ENCODE measurements at regions of chr2 and their contacts with region 1.

Region 1: GRCh38 chr2:45643543-45644542 is 7.6 kb upstream of the PRKCE start:
- DNase-seq: peak; percentile 76 to 88
- ATAC-seq: peak; percentile 95 to 99 (median 99)
- H3K4me3 ChIP-seq: peak overlapping the region; percentile 11
- H3K4me3 Mint-ChIP-seq: peak overlapping the region; percentile 70
- H3K27ac ChIP-seq: no peak overlapping the region
- H3K27ac Mint-ChIP-seq: peak overlapping the region in 1 of 2 donors; percentile 42
- H3K4me1 ChIP-seq: peaks cover 13% of the 10 kb centered on the region
- H3K4me1 Mint-ChIP-seq: peaks cover 9 to 11% of the 10 kb centered on the region in 2 donors
- H3K27me3 ChIP-seq: peaks cover 6% of the 10 kb centered on the region
- H3K27me3 Mint-ChIP-seq: peaks cover 23 to 29% of the 10 kb centered on the region in 2 donors
- CTCF ChIP-seq: peak; percentile 96

Region 2: GRCh38 chr2:45778720-45779171 is 134.9 kb after region 1 on chr2:
- intact Hi-C with region 1: loop called (anchors 1 kb)
- DNase-seq: peak; percentile 48 to 89
- ATAC-seq: peak; percentile 85 to 96 (median 92)
- H3K4me3 ChIP-seq: no peak overlapping the region
- H3K4me3 Mint-ChIP-seq: peak overlapping the region; percentile 58
- H3K27ac ChIP-seq: no peak overlapping the region
- H3K27ac Mint-ChIP-seq: no peak overlapping the region
- H3K4me1 ChIP-seq: peaks cover 5% of the 10 kb centered on the region
- H3K4me1 Mint-ChIP-seq: peaks cover 9 to 11% of the 10 kb centered on the region in 2 donors
- H3K27me3 ChIP-seq: no peaks in the 10 kb centered on the region
- H3K27me3 Mint-ChIP-seq: no peaks in the 10 kb centered on the region
- CTCF ChIP-seq: peak; percentile 95

Region 3: DNA sequence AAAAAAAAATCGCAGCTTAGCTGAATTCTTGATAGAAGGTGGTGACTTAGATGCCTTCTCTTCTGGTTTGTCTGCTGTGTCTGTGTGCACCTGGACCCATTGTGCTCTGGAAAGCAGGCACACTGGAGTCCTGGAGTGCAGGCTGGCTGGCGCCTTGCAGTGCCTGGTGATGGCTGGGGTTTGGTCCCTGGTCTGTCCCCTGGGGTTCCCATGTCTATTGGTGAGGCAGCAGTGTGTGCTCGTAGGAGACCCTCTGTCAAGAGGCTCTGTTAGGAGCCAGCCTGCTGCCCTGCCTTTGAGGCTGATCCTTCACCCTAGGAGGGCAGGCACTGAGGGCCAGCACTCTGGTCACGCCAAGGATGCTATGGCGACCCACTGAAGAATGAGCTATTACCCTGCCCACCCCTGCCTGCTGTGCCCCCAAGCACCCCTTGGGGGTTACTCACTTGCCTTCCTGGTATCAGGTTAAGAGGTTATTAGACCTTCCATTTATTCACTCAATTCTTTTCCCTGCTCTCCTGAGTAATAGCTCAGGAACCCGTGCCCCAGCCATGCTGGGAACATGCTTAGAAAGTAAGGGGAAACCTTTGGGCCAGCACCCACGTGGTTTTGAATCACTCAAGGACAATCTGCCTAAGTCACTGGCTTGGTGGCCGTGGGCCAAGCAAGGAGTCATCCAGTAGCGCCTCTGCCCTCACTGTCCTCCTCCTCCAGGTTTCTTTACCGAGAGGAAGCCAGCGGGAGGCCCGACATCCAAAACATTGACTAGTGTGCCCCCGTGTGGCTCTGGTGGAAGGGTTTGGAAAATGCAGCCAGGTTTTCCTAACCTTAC is 292.2 kb after region 1 on chr2:
- intact Hi-C with region 1: loop called (anchors 1 kb)
- DNase-seq: peak in 1 of 2 donors; percentile 68
- ATAC-seq: peak; percentile 38 to 53 (median 40)
- H3K4me3 ChIP-seq: no peak overlapping the region
- H3K4me3 Mint-ChIP-seq: no peak overlapping the region
- H3K27ac ChIP-seq: no peak overlapping the region
- H3K27ac Mint-ChIP-seq: no peak overlapping the region
- H3K4me1 ChIP-seq: peaks cover 5% of the 10 kb centered on the region
- H3K4me1 Mint-ChIP-seq: peaks cover 0 to 4% of the 10 kb centered on the region in 2 donors
- H3K27me3 ChIP-seq: no peaks in the 10 kb centered on the region
- H3K27me3 Mint-ChIP-seq: no peaks in the 10 kb centered on the region
- CTCF ChIP-seq: no peak

Region 4: DNA sequence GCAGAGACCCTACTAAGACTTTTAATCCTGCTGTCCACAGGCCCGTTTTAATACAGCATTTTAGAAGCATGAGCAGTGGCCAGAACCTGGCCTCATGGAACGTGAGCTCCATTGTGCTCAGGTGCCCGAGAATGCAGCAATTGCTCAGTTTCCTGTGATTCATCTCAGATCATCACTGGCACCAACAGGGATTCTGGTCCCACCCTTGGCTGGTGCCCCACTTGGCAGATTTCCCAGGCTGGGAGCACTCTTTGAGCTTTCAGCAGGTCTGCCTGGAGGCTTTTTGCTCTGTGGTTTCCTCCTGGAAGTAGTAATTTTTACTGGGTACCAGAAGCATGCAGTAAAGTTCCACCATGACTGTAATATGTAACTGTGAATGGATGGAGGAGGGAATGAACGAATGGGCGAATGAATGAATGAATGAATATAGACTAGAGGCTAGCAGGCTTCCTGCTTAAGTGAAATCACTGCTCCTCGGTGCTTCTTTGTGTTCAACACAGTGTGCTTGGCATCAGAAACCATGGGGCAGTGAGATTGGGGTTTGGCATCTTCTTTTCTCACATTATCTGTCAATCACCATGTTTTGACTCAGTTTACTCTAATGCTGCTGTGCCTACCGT is 320.5 kb after region 1 on chr2:
- intact Hi-C with region 1: no loop called
- DNase-seq: no peak
- ATAC-seq: no peak
- H3K4me3 ChIP-seq: no peak overlapping the region
- H3K4me3 Mint-ChIP-seq: no peak overlapping the region
- H3K27ac ChIP-seq: no peak overlapping the region
- H3K27ac Mint-ChIP-seq: no peak overlapping the region
- H3K4me1 ChIP-seq: no peaks in the 10 kb centered on the region
- H3K4me1 Mint-ChIP-seq: peaks cover 12 to 13% of the 10 kb centered on the region in 2 donors
- H3K27me3 ChIP-seq: no peaks in the 10 kb centered on the region
- H3K27me3 Mint-ChIP-seq: no peaks in the 10 kb centered on the region
- CTCF ChIP-seq: no peak